ENCODE measurements at regions of chr10 and their contacts with region 1.

Region 1: GRCh38 chr10:102420810-102421644 is at the start of gene FBXL15:
- H3K4me3 Mint-ChIP-seq: peak within 1 kb of the TSS; percentile 85
- H3K27ac Mint-ChIP-seq: peak within 1 kb of the TSS; percentile 93
- H3K4me1 Mint-ChIP-seq: peaks cover 63% of the 10 kb centered on the region
- H3K27me3 Mint-ChIP-seq: peaks cover 36% of the 10 kb centered on the region

Region 2: GRCh38 chr10:102347241-102347828 is 73.7 kb before region 1 on chr10:
- intact Hi-C with region 1: no loop called
- H3K4me3 Mint-ChIP-seq: no peak overlapping the region
- H3K27ac Mint-ChIP-seq: no peak overlapping the region
- H3K4me1 Mint-ChIP-seq: no peaks in the 10 kb centered on the region
- H3K27me3 Mint-ChIP-seq: no peaks in the 10 kb centered on the region

Region 3: GRCh38 chr10:102476466-102477141 is 55.6 kb after region 1 on chr10:
- intact Hi-C with region 1: loop called (anchors 1 kb)
- H3K4me3 Mint-ChIP-seq: no peak overlapping the region
- H3K27ac Mint-ChIP-seq: no peak overlapping the region
- H3K4me1 Mint-ChIP-seq: peaks cover 10% of the 10 kb centered on the region
- H3K27me3 Mint-ChIP-seq: no peaks in the 10 kb centered on the region

Measured in dendritic cell treated with granulocyte-macrophage colony-stimulating factor and Interleukin-4, amounts not matched to agents 40 ng/mL and 50 ng/mL, for 4 days (primary cell).